Mammary epithelial cell (primary cell): ENCODE measurements at regions of chr4 and their contacts with region 1.

Region 1: DNA sequence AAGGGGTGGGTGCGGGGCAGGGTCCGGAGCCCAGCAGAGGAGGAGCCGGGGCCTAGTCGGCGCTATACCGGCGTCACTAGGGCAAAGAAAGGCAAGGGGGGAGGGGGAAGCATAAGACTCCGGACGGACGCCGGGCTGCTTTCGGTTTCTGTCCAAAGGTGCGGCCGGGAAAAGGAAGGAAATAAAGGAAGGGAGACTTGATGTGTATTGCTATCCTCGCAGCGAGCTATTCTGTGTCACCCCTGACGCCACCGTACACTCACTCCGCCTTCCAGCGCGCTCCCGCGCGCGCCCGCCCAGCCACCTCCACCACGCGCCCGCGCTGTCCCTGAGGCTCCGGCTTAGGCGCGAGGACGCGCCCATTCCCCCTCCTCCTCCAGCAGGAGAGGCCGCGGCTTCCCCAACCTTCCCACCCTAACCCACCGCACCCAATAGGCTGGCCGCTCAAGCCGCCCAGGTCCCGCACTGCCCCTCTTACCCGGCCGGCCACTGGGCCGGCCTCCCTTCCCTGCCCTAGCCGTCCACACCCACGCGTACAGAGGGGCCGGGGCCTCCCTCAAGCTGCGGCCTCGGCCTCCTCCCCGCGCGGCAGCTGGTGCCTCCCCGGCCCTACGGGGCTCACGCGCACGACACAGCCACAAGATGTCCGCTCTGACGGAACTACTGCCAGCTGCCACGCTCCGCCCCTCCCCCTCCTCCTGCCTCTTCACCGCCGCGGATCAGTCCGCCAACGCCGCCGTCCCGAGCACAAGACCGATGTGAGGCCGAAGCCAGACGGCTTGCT is at the start of gene UBE2D3:
- DNase-seq: peak; percentile 94
- H3K4me3 ChIP-seq: peak within 1 kb of the TSS; percentile 92 to 93 (median 93)
- H3K27ac ChIP-seq: peak within 1 kb of the TSS; percentile 99
- H3K4me1 ChIP-seq: peaks cover 15% of the 10 kb centered on the region
- H3K27me3 ChIP-seq: no peaks in the 10 kb centered on the region
- CTCF ChIP-seq: peak in 1 of 2 donors; percentile 20
- total RNA-seq, gene UBE2D3: 338 to 352 TPM

Region 2: DNA sequence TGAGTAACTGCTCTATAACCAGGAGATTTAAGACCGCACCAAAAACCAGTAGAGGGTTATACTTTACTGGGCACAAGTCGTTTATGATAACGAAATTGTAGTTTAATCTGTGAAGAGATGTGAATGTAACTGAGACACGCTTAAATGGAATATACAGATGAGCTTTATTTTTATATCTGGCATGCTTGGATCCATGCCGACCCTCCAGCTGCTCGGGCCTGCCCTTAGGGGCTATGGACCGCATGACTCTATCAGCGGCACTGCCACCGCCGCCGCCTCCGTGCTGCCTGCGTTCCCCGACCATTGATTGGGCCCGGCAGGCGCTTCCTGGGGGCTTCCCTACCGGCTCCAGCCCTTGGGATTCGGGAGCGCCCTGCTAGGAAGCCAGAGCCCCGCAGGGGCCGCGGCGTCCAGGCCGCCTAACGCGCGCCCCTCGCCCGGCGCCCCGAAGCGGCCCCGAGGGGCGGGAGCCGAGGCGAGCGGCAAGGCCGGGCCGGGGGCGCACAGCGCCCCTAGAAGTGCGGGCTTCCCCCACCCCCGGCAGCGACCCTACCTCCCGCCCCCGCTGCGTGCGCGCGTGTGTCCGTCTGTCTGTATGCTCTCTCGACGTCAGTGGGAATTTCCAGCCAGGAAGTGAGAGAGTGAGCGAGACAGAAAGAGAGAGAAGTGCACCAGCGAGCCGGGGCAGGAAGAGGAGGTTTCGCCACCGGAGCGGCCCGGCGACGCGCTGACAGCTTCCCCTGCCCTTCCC is 326.2 kb before region 1 on chr4 and contains the start of gene NFKB1:
- CTCF ChIA-PET with region 1: no interaction called
- dilution Hi-C with region 1: no loop called
- in situ Hi-C with region 1: no loop called
- intact Hi-C with region 1: loop called (anchors 5 kb)
- DNase-seq: peak; percentile 93
- H3K4me3 ChIP-seq: peak within 1 kb of the TSS; percentile 69 to 86 (median 81)
- H3K27ac ChIP-seq: peak within 1 kb of the TSS; percentile 91
- H3K4me1 ChIP-seq: peaks cover 19% of the 10 kb centered on the region
- H3K27me3 ChIP-seq: no peaks in the 10 kb centered on the region
- CTCF ChIP-seq: no peak
- total RNA-seq, gene NFKB1: 23.5 to 52.9 TPM

Region 3: GRCh38 chr4:102789317-102789717 is 37.8 kb before region 1 on chr4:
- CTCF ChIA-PET with region 1: no interaction called
- dilution Hi-C with region 1: no loop called
- in situ Hi-C with region 1: no loop called
- intact Hi-C with region 1: loop called (anchors 5 kb)
- DNase-seq: peak; percentile 64
- H3K4me3 ChIP-seq: no peak overlapping the region
- H3K27ac ChIP-seq: peak overlapping the region; percentile 33
- H3K4me1 ChIP-seq: no peaks in the 10 kb centered on the region
- H3K27me3 ChIP-seq: no peaks in the 10 kb centered on the region
- CTCF ChIP-seq: no peak

Region 4: DNA sequence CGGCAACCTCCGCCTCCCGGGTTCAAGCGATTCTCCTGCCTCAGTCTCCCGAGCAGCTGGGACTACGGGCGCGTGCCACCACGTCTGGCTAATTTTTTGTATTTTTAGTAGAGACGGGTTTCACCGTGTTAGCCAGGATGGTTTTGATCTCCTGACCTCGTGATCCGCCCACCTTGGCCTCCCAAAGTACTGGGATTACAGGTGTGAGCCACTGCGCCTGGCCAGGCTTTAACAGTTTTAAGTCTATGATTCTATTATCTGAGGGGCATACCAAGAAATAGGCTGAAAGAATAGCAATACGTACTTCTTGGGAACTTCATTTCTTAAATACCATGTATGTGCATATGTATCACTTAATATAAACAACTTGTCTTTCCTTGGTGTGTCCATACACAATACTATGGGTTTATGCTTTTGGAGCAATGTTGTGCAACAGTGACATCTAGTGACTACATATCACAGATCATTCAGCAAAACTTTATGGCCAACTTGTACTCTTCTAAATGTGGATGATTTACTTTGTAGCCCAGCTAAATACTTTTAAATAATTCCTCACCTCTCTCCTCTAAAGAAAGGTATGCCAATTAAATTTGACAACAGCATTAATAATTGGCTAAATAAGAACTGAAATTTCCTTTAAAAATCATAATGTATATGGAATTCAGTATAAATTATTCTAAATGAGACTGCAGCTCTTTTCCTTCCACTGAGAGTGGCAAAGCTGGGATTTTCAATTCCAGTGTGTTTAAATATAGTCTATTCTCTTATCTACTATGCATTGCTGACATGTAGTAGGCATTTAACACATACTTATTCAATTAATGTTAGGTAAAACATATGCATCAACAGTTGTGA is 182.0 kb after region 1 on chr4:
- CTCF ChIA-PET with region 1: no interaction called
- dilution Hi-C with region 1: no loop called
- in situ Hi-C with region 1: no loop called
- intact Hi-C with region 1: loop called (anchors 2 kb)
- DNase-seq: peak; percentile 56
- H3K4me3 ChIP-seq: no peak overlapping the region
- H3K27ac ChIP-seq: no peak overlapping the region
- H3K4me1 ChIP-seq: peaks cover 15% of the 10 kb centered on the region
- H3K27me3 ChIP-seq: no peaks in the 10 kb centered on the region
- CTCF ChIP-seq: peak; percentile 74 to 75

Region 5: DNA sequence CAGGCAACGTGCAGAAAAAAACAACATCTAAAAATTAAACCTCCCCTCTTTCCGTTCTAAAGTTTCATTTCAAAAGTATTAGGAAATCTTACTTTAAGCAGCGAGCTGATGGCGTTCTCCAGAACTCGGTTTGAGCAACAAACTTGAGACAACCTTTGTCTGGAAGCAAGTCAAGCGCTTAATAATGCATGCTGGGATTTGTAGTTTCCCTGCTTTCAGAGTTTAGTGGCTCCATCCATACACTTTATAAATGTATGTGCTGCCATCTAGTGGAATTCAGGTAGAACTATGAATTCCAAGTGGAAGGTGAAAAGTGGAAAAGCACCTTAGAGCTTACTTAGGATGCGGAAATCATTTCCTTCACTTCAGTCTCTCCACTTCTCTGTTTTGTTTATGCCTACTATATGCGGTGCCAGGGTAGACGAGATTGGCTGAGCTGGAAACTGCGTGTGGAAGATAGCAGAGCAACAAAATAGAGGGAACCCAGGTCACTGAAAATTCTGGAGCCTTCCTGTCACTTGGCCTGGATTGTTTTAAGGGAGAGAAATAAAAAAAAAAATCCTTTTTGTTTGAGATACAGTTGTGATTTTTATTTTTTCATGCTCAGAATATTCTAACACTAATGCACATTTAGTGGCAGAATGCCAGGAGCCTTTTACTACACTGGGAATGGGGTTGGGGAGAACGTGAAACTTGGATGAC is 272.8 kb after region 1 on chr4 and contains the start of gene BDH2:
- CTCF ChIA-PET with region 1: no interaction called
- dilution Hi-C with region 1: no loop called
- in situ Hi-C with region 1: no loop called
- intact Hi-C with region 1: loop called (anchors 1 kb)
- DNase-seq: peak; percentile 91
- H3K4me3 ChIP-seq: peak within 1 kb of the TSS; percentile 48 to 71 (median 55)
- H3K27ac ChIP-seq: peak within 1 kb of the TSS; percentile 54
- H3K4me1 ChIP-seq: no peaks in the 10 kb centered on the region
- H3K27me3 ChIP-seq: no peaks in the 10 kb centered on the region
- CTCF ChIP-seq: peak; percentile 64 to 68
- total RNA-seq, gene BDH2: 20.7 to 23.0 TPM